Dendritic cell treated with granulocyte-macrophage colony-stimulating factor and Interleukin-4, amounts not matched to agents 40 ng/mL and 50 ng/mL, for 4 days (primary cell): ENCODE measurements at regions of chr5 and their contacts with region 1.

Region 1: DNA sequence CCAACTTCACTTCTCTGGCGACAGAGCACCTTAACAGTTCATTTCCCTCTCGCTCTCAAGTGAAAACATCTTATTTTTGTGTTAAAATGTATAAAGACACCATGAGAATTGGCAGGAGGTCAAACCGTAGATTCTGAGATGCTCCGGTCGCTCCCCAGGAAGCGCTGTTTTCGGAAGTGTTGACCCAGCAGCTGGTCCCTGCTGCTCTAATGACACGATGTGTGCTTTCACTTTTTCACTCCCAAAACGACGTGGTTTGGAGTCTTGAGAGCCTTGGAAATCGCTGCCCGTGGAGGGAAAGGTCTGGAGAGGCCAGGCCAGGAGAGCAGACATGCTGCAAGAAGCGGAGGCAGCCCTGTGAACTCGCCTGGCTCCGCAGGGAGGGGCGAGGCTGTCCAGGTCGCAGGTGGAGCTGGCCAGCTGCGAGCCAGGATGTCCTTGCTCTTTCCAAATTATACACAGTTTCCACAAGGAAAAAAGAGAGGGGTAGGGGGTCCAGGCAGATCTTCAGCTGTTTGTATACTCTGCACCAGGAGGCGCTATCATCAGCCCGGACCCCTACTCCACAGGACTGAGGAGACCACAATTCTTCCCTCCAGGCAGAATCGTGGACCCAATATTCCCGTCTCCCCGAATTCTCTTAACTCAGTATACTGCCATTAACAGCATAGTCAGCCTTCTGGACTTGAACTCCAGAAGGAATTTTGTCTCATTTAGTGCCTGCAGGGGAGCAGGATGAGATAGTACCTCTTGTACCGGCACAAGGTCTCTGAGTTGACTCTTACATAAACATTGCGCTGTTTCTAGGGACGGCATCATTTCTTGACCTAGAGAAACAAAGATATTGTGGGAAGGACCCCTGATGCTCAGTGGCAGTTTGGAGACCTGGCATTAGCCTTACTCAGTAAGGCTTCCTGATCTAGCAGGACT is 248.6 kb upstream of the ANKRD55 start:
- H3K4me3 Mint-ChIP-seq: peak overlapping the region; percentile 77
- H3K27ac Mint-ChIP-seq: peak overlapping the region; percentile 98
- H3K4me1 Mint-ChIP-seq: peaks cover 73% of the 10 kb centered on the region
- H3K27me3 Mint-ChIP-seq: no peaks in the 10 kb centered on the region

Region 2: GRCh38 chr5:56415356-56415765 is 66.3 kb before region 1 on chr5:
- intact Hi-C with region 1: loop called (anchors 5 kb)
- H3K4me3 Mint-ChIP-seq: peak overlapping the region; percentile 59
- H3K27ac Mint-ChIP-seq: peak overlapping the region; percentile 94
- H3K4me1 Mint-ChIP-seq: peaks cover 72% of the 10 kb centered on the region
- H3K27me3 Mint-ChIP-seq: no peaks in the 10 kb centered on the region

Region 3: GRCh38 chr5:56588636-56589480 is 107.2 kb after region 1 on chr5:
- intact Hi-C with region 1: loop called (anchors 10 kb)
- H3K4me3 Mint-ChIP-seq: no peak overlapping the region
- H3K27ac Mint-ChIP-seq: peak overlapping the region; percentile 67
- H3K4me1 Mint-ChIP-seq: peaks cover 65% of the 10 kb centered on the region
- H3K27me3 Mint-ChIP-seq: peaks cover 4% of the 10 kb centered on the region

Region 4: DNA sequence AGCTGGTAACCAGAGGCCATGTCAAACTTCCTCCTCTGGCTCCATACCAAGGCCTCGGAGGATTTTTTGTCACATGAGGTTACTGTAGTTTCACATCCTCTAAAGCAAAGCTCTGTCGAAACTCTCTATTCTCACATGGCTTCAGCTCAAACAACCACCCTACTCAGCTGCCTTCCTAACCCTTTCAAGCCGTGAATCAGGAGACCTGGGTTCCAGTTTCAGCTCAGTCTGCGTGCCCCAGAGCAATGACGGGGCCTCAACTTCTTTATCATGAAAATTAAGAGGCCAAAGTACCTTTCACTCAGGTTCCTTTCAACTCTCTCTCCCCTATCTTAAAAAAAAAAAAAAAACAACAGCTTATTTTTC is 188.4 kb after region 1 on chr5:
- intact Hi-C with region 1: loop called (anchors 5 kb)
- H3K4me3 Mint-ChIP-seq: no peak overlapping the region
- H3K27ac Mint-ChIP-seq: peak overlapping the region; percentile 92
- H3K4me1 Mint-ChIP-seq: peaks cover 85% of the 10 kb centered on the region
- H3K27me3 Mint-ChIP-seq: no peaks in the 10 kb centered on the region

Region 5: GRCh38 chr5:56814963-56815658 is 333.4 kb after region 1 on chr5 and contains the start of gene MAP3K1:
- intact Hi-C with region 1: loop called (anchors 5 kb)
- H3K4me3 Mint-ChIP-seq: peak within 1 kb of the TSS; percentile 96
- H3K27ac Mint-ChIP-seq: peak within 1 kb of the TSS; percentile 96
- H3K4me1 Mint-ChIP-seq: peaks cover 31% of the 10 kb centered on the region
- H3K27me3 Mint-ChIP-seq: no peaks in the 10 kb centered on the region

Region 6: GRCh38 chr5:56838409-56839039 is 356.8 kb after region 1 on chr5:
- intact Hi-C with region 1: loop called (anchors 5 kb)
- H3K4me3 Mint-ChIP-seq: no peak overlapping the region
- H3K27ac Mint-ChIP-seq: peak overlapping the region; percentile 74
- H3K4me1 Mint-ChIP-seq: peaks cover 81% of the 10 kb centered on the region
- H3K27me3 Mint-ChIP-seq: no peaks in the 10 kb centered on the region